Sigmoid colon (tissue), 7 donors: ENCODE measurements at regions of chr17 and their contacts with region 1.

Region 1: GRCh38 chr17:7314719-7315569 is at the start of gene GPS2:
- DNase-seq: peak; percentile 96
- H3K4me3 ChIP-seq: peak within 1 kb of the TSS; percentile 80 to 89 (median 86)
- H3K27ac ChIP-seq: peak within 1 kb of the TSS; percentile 94 to 99 (median 96)
- H3K4me1 ChIP-seq: peaks cover 0 to 45% (median 36%) of the 10 kb centered on the region in 4 donors
- H3K27me3 ChIP-seq: no peaks in the 10 kb centered on the region
- CTCF ChIP-seq: no peak
- EP300 ChIP-seq: peak in 1 of 4 donors; percentile 46
- POLR2A ChIP-seq: peak; percentile 55 to 71
- total RNA-seq, gene GPS2: 82.3 to 114 (median 85.4) TPM

Region 2: GRCh38 chr17:7329374-7329996 is 14.5 kb after region 1 on chr17:
- intact Hi-C with region 1: loop called (anchors 1 kb)
- DNase-seq: peak; percentile 100
- H3K4me3 ChIP-seq: peak overlapping the region; percentile 69 to 93 (median 83)
- H3K27ac ChIP-seq: peak overlapping the region; percentile 88 to 94 (median 94)
- H3K4me1 ChIP-seq: peaks cover 0 to 31% (median 20%) of the 10 kb centered on the region in 4 donors
- H3K27me3 ChIP-seq: no peaks in the 10 kb centered on the region
- CTCF ChIP-seq: no peak
- EP300 ChIP-seq: peak in 1 of 4 donors; percentile 41
- POLR2A ChIP-seq: peak; percentile 88 to 93